AG04450 (cell line): ENCODE measurements at regions of chr3 and their contacts with region 1.

Region 1: GRCh38 chr3:164222197-164222596 is 856.1 kb downstream of the SI start:
- DNase-seq: no peak
- H3K4me3 ChIP-seq: no peak overlapping the region
- H3K27ac ChIP-seq: no peak overlapping the region
- H3K27me3 ChIP-seq: no peaks in the 10 kb centered on the region
- CTCF ChIP-seq: no peak

Region 2: DNA sequence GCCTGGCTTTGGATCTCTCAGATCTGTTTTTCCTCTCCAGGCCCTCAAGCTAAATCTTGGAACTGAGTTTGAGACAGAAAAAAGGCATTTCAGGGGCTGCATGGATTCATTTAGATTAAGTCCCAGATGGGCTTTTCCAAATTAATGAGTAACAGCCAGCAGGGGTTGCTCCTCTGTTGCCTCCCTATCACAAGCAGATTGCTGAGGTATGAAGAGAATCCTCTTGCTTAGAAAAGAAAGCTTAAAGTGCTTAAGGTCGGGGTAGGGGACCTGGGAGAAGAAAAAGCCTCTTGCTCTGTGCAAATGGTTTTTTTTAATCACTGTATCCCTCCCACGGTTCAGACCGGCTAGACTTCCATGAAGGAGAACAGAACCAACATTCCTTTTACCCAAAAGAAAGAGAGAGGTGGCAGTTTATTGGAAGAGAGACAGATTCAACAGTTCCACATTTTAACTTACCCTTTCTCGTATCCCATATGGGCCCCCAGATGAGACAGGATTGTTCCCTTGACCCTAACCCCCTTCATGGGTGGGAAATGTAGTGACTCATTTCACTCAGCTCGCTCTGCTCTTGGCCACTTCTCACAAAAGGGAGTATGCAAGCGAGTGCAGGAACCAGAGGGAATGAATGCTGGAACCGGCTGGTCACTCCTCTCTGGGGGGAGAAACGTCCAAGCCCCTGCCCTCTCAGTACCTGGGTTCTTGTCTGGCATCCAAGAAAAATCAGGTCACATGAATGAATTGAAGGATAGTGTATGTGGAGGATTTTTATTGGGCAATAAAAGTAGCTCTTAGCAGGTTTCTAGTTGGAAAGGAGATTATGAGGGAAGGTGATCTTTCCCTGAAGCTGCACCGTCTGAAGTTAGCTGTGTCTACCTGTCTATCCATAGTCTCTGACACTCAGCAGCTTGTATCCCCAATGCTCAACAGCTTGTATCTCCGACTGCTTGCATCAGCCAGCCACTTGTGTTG is 110.9 kb after region 1 on chr3:
- CTCF ChIA-PET with region 1: no interaction called
- POLR2A ChIA-PET with region 1: no interaction called
- DNase-seq: no peak
- H3K4me3 ChIP-seq: no peak overlapping the region
- H3K27ac ChIP-seq: no peak overlapping the region
- H3K27me3 ChIP-seq: no peaks in the 10 kb centered on the region
- CTCF ChIP-seq: no peak

Region 3: GRCh38 chr3:164351131-164351530 is 128.9 kb after region 1 on chr3:
- CTCF ChIA-PET with region 1: no interaction called
- POLR2A ChIA-PET with region 1: no interaction called
- DNase-seq: no peak
- H3K4me3 ChIP-seq: no peak overlapping the region
- H3K27ac ChIP-seq: no peak overlapping the region
- H3K27me3 ChIP-seq: no peaks in the 10 kb centered on the region
- CTCF ChIP-seq: no peak

Region 4: GRCh38 chr3:165133188-165133899 is 911.1 kb after region 1 on chr3:
- CTCF ChIA-PET with region 1: no interaction called
- POLR2A ChIA-PET with region 1: interaction called, 11 read pairs
- DNase-seq: no peak
- H3K4me3 ChIP-seq: no peak overlapping the region
- H3K27ac ChIP-seq: no peak overlapping the region
- H3K27me3 ChIP-seq: no peaks in the 10 kb centered on the region
- CTCF ChIP-seq: no peak